IMR-90 (cell line): ENCODE measurements at regions of chr9 and their contacts with region 1.

Region 1: DNA sequence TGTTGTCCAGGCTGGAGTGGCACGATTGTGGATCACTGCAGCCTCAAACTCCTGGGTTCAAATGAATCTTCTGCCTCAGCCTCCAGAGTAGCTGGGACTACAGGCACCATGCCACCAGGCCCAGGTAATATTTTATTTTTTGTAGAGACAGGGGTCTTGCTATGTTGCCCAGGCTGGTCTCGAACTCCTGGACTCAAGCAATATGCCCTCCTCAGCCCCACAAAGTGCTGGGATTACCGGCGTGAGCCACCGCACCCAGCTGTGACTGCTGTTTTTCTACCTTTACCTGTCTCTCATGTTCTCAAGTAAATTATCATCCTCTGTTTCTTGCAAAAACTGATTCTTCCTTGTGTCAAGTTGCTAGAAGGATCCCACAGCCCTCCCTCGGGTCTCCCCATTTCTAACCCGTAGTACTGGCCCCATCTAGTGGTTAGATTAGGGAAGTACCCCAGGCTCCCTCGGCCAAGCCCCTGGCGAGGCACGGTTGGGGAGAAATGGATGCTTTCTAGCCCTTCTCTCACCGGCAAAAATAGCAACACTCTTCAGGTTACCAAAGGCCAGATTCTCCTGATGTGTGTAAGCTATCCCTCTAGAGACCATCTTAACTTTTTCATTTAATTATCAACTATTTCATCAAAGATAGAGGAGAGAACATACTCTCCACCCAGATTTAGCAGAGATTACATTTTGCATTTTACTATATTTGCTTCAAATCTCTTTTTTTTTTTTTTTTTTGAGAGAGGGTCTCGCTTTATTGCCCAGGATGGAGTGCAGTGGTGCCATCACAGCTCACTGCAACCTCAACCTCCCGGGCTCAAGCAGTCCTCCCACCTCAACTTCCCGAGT is 19.2 kb upstream of the TOR1B start:
- DNase-seq: peak; percentile 75
- ATAC-seq: peak; percentile 96
- H3K4me3 ChIP-seq: no peak overlapping the region
- H3K27ac ChIP-seq: no peak overlapping the region
- H3K4me1 ChIP-seq: peaks cover 3% of the 10 kb centered on the region; the same call in 1 of the 2 replicates
- H3K27me3 ChIP-seq: peaks cover 10% of the 10 kb centered on the region
- CTCF ChIP-seq: peak; percentile 96
- POLR2A ChIP-seq: peak; percentile 66
- RAD21 ChIP-seq: peak; percentile 100

Region 2: DNA sequence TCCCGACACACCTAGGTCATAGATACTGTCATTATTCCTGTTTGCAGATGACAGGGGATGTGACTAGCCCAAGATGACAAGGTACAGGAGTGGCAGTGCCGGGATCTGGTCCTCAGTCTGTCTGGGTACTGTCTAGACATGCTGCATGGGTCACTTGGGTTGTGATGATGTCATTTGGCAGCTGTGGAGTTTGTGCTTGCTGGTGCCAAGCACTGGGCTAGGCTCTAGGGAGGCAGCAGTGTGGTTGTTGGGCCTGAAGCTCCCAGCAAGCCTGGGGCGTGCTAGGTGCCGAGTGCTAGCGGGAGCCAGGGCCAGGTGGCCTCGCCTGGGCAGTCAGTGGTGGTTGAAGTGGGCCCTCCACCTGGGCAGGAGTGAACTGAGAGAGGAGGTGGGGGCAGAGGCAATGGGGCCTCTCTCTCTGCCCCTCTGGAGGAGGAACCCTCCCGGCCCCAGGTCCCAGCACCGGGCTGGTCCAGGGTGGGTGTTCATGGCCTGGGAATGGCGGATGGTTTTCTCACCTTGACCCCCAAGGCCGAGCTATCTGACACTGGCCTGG is 133.0 kb before region 1 on chr9:
- CTCF ChIA-PET with region 1: no interaction called
- POLR2A ChIA-PET with region 1: no interaction called
- dilution Hi-C with region 1: no loop called
- in situ Hi-C with region 1: loop called (anchors 5 kb)
- intact Hi-C with region 1: no loop called
- DNase-seq: no peak
- ATAC-seq: no peak
- H3K4me3 ChIP-seq: no peak overlapping the region
- H3K27ac ChIP-seq: no peak overlapping the region
- H3K4me1 ChIP-seq: peaks cover 15% of the 10 kb centered on the region; the same call in 1 of the 2 replicates
- H3K27me3 ChIP-seq: no peaks in the 10 kb centered on the region
- CTCF ChIP-seq: no peak
- POLR2A ChIP-seq: no peak
- RAD21 ChIP-seq: no peak

Region 3: DNA sequence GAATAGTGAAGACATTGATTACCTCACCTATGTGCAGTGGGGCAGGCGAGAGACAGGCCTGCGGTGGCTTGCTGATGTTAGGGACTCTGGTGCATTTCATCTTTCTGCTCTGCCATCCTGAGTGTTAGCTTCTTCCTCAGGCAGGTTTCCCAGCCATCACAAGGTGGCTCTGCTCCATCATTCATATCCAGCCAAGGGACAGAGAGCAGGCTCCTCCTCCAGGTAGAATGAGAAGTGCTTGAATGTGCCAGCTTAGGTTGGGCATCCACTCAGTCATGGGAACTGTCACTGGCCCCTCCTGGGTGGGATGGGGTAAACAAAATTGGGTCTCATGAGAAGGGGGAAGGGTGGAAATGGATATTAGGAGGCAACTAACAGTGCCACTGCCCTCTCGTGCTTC is 294.8 kb after region 1 on chr9:
- CTCF ChIA-PET with region 1: no interaction called
- POLR2A ChIA-PET with region 1: no interaction called
- dilution Hi-C with region 1: no loop called
- in situ Hi-C with region 1: no loop called
- intact Hi-C with region 1: no loop called
- DNase-seq: no peak
- ATAC-seq: no peak
- H3K4me3 ChIP-seq: no peak overlapping the region
- H3K27ac ChIP-seq: no peak overlapping the region
- H3K4me1 ChIP-seq: no peaks in the 10 kb centered on the region
- H3K27me3 ChIP-seq: no peaks in the 10 kb centered on the region
- CTCF ChIP-seq: no peak
- POLR2A ChIP-seq: no peak
- RAD21 ChIP-seq: no peak